Endothelial cell of umbilical vein (primary cell): ENCODE measurements at regions of chr12 and their contacts with region 1.

Region 1: GRCh38 chr12:41264281-41264680 is 76.2 kb downstream of the PDZRN4 start:
- DNase-seq: peak; percentile 16
- H3K4me3 ChIP-seq: no peak overlapping the region
- H3K27ac ChIP-seq: no peak overlapping the region
- H3K4me1 ChIP-seq: no peaks in the 10 kb centered on the region
- H3K27me3 ChIP-seq: no peaks in the 10 kb centered on the region
- CTCF ChIP-seq: peak; percentile 13 to 16
- POLR2A ChIP-seq: no peak

Region 2: GRCh38 chr12:40946612-40947194 is 317.6 kb before region 1 on chr12:
- CTCF ChIA-PET with region 1: interaction called, 22 read pairs
- POLR2A ChIA-PET with region 1: no interaction called
- dilution Hi-C with region 1: no loop called
- intact Hi-C with region 1: loop called (anchors 5 kb)
- DNase-seq: peak; percentile 55
- H3K4me3 ChIP-seq: no peak overlapping the region
- H3K27ac ChIP-seq: no peak overlapping the region
- H3K4me1 ChIP-seq: no peaks in the 10 kb centered on the region
- H3K27me3 ChIP-seq: no peaks in the 10 kb centered on the region
- CTCF ChIP-seq: peak in 1 of 2 donors; percentile 41
- POLR2A ChIP-seq: no peak

Region 3: DNA sequence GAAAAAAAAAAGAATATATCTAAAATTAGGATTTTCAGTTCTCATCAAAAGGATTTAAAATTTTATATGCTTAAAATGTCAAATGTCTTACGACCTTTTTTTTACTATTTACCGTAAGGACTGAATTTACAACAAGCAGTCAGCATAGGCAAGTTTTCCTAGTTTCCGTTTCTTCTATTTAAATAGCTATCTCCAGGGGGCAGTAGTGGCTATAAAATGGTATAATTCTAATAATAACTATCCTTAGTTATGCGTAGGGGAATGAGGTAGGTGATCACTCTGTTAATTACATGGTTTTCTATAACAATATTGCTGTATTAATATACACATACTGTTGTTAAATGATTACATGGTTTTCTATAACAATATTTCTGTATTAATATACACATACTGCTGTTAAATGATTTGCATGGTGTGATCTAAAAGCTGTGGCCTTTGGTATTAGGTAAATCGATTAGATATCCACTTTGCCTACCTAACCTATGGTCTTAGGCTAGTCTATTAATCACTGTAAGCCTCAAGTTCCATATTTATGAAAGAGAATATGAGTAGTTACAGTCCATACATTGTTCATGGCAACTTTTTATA is 293.9 kb before region 1 on chr12:
- CTCF ChIA-PET with region 1: interaction called, 13 read pairs
- POLR2A ChIA-PET with region 1: no interaction called
- dilution Hi-C with region 1: no loop called
- intact Hi-C with region 1: no loop called
- DNase-seq: peak; percentile 12
- H3K4me3 ChIP-seq: no peak overlapping the region
- H3K27ac ChIP-seq: no peak overlapping the region
- H3K4me1 ChIP-seq: no peaks in the 10 kb centered on the region
- H3K27me3 ChIP-seq: no peaks in the 10 kb centered on the region
- CTCF ChIP-seq: peak in 1 of 2 donors; percentile 4
- POLR2A ChIP-seq: no peak

Region 4: DNA sequence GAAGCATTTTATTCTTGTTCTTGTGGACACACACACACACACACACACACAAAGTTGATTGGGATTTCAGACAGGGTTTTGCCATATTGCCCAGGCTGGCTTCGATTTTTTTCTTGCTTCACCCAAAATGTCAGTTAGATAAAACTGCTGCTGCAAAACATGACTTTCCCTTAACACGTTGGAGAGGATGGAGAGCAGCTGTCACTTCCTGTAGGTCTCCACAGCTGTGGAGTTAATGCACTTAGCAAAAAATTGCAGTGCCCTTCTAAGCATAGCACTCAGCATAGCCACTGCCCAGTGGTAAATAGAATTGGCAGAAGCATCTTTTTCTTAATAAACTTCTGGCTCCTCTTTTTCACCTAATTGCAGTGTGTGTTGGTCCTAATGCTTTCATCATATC is 21.7 kb before region 1 on chr12:
- CTCF ChIA-PET with region 1: no interaction called
- POLR2A ChIA-PET with region 1: no interaction called
- dilution Hi-C with region 1: no loop called
- intact Hi-C with region 1: no loop called
- DNase-seq: no peak
- H3K4me3 ChIP-seq: no peak overlapping the region
- H3K27ac ChIP-seq: no peak overlapping the region
- H3K4me1 ChIP-seq: no peaks in the 10 kb centered on the region
- H3K27me3 ChIP-seq: no peaks in the 10 kb centered on the region
- CTCF ChIP-seq: no peak
- POLR2A ChIP-seq: no peak

Region 5: DNA sequence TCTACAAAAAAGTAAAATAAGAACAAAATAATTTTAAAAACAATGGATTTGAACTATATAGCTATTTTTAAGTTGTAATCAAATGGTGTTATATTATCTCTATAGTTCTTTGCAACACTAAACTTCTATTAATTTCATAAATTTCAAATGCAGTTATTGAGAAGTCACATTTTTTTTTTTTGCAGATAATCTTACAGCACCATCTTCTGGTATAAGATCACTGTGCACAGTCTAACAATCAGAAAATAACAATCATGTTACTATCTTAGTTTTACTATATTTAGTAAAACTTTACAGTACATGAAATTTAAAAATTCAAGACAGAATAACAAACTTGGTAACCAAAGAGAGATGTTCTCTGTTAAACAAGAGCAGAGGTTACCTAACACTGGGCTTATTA is 839.8 kb after region 1 on chr12:
- CTCF ChIA-PET with region 1: interaction called, 17 read pairs
- POLR2A ChIA-PET with region 1: no interaction called
- dilution Hi-C with region 1: no loop called
- intact Hi-C with region 1: no loop called
- DNase-seq: no peak
- H3K4me3 ChIP-seq: no peak overlapping the region
- H3K27ac ChIP-seq: no peak overlapping the region
- H3K4me1 ChIP-seq: no peaks in the 10 kb centered on the region
- H3K27me3 ChIP-seq: no peaks in the 10 kb centered on the region
- CTCF ChIP-seq: peak in 1 of 2 donors; percentile 5
- POLR2A ChIP-seq: no peak